Head of caudate nucleus (tissue), 42 donors: ENCODE measurements at regions of chr11 and their contacts with region 1.

Region 1: GRCh38 chr11:2314525-2315394 is 12.9 kb downstream of the TSPAN32 start:
- DNase-seq: peak; percentile 63 to 91 (median 82)

Region 2: DNA sequence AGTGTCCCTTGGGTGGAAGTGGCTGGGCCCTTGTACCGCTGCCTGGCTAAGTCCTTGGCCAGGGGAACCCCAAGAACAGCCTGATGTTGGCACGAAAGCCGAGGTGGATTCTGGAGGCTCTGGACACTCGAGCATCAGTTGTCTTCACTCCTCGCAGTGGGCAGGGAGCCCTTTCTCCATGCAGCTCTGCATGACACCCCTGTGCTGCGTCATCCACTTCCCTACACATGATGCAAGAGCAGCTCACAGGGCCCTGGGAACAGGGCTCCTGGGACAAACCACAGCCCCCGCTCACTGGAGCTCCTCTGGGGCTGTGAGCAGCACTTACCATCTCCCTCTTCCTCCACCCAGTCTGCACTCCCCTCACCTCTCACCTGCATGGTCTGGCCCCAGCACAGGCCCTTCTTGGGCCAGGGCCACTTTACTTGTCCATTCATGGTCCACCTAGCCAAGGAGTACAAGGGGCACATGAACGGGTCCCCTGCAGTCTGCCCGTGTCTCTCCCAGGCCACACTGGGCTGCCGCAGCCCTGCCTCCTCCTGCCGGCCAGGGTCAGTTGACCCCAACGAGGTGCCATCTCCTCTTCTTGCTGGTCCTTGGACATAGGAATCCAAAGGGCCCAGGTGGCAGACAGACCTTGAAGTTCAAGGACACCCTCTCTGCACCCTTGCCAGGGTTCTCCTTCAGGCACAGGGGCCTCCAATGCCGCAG is 242.1 kb before region 1 on chr11:
- intact Hi-C with region 1: no loop called
- DNase-seq: peak in 1 of 42 donors; percentile 29

Region 3: DNA sequence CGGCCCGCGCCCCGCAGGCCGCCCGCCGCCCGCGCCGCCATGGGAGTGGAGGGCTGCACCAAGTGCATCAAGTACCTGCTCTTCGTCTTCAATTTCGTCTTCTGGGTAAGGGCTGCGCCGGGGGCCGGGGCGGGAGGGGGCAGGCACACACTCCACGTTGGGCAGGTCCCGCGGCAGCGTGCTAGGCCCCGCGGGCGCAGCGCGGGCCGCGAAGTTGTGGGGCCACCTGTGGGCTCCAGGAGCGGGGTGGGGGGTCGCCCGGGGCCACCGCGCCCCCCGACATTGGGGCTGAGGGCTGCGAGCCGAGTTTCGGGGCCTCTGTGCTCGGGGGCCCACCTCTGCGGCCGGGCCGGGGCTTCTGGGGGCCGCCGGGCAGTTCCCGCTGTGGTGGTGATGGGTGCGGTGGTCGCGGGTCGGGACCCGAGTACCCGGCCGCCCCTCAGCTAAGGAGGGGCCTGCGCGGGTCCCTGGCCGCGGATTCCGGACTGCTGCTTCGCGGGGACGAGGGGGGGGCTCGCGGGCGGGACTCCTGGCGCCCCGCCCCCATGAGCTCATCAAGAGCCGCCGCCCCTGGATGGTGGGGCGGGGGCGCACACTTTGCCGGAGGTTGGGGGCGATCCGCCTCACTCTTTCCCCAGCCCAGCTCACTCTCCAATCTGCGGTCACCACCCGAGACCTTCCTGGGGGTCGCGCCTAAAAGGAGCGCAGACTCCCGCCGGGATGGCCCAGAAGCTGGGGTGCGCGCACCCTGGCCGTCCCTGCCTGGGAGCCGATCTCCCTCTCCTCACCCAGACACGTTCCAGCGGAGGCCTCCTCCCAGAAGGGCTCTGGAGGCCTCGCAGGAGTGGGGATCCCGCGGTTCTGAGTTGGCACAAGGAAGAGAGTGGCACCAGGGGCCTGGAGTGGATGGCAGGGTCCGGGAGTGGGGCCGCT is 63.0 kb after region 1 on chr11:
- intact Hi-C with region 1: loop called (anchors 10 kb)
- DNase-seq: peak in 41 of 42 donors; percentile 44 to 90 (median 74)